GM12878 (cell line): ENCODE measurements at regions of chr17 and their contacts with region 1.

Region 1: GRCh38 chr17:8785547-8786413 is 13.4 kb downstream of the MFSD6L start:
- DNase-seq: no peak
- ATAC-seq: peak; percentile 89
- H3K4me3 ChIP-seq: no peak overlapping the region
- H3K27ac ChIP-seq: no peak overlapping the region
- H3K4me1 ChIP-seq: no peaks in the 10 kb centered on the region
- H3K27me3 ChIP-seq: no peaks in the 10 kb centered on the region
- CTCF ChIP-seq: peak; percentile 64 to 87 (median 84)
- EP300 ChIP-seq: no peak
- POLR2A ChIP-seq: no peak
- RAD21 ChIP-seq: peak; percentile 75

Region 2: GRCh38 chr17:8409966-8410864 is 375.6 kb before region 1 on chr17:
- CTCF ChIA-PET with region 1: interaction called, 22 read pairs
- POLR2A ChIA-PET with region 1: no interaction called
- RAD21 ChIA-PET with region 1: interaction called, 12 read pairs
- SMC1A ChIA-PET with region 1: interaction called, 9 read pairs
- in situ Hi-C with region 1: no loop called
- intact Hi-C with region 1: loop called (anchors 1 kb)
- DNase-seq: peak; percentile 17
- ATAC-seq: peak; percentile 90
- H3K4me3 ChIP-seq: no peak overlapping the region
- H3K27ac ChIP-seq: no peak overlapping the region
- H3K4me1 ChIP-seq: no peaks in the 10 kb centered on the region
- H3K27me3 ChIP-seq: peaks cover 0 to 4% of the 10 kb centered on the region in 2 experiments; a peak in 3 of 4 replicates
- CTCF ChIP-seq: peak; percentile 82 to 87 (median 83)
- EP300 ChIP-seq: 0 out of 4 replicates have a peak, but pooled peaks of 1 of the 2 experiments have one; percentile 15
- POLR2A ChIP-seq: no peak
- RAD21 ChIP-seq: peak; percentile 71

Region 3: GRCh38 chr17:8753976-8754440 is 31.8 kb before region 1 on chr17:
- CTCF ChIA-PET with region 1: interaction called, 19 read pairs
- POLR2A ChIA-PET with region 1: no interaction called
- RAD21 ChIA-PET with region 1: interaction called, 4 read pairs
- SMC1A ChIA-PET with region 1: interaction called, 7 read pairs
- in situ Hi-C with region 1: no loop called
- intact Hi-C with region 1: loop called (anchors 2 kb)
- DNase-seq: no peak
- ATAC-seq: peak; percentile 83
- H3K4me3 ChIP-seq: no peak overlapping the region
- H3K27ac ChIP-seq: no peak overlapping the region
- H3K4me1 ChIP-seq: no peaks in the 10 kb centered on the region
- H3K27me3 ChIP-seq: no peaks in the 10 kb centered on the region; a peak in 1 of 4 replicates
- CTCF ChIP-seq: peak; percentile 56 to 67 (median 58); a peak in 5 of 6 replicates
- EP300 ChIP-seq: no peak
- POLR2A ChIP-seq: no peak
- RAD21 ChIP-seq: peak; percentile 57

Region 4: DNA sequence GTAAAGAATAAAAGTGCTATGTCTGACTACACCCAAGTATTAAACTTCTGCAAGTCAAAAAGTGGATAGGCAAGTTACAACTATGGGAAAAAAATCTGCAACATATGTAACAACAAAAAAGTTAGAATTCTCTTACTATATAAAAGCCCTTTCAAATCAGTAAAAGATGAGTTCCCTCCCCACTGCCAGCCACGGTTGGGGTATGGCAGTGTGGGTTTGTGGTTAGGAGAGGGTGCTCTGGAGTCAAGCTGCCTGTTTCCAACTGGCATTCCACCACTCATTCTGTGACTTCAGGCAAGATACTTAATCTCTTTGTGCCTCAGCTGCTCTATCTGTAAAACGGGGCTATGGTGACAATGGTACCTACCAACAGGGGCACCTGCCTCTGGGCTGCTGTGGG is 40.0 kb after region 1 on chr17:
- CTCF ChIA-PET with region 1: interaction called, 10 read pairs
- POLR2A ChIA-PET with region 1: no interaction called
- RAD21 ChIA-PET with region 1: no interaction called
- SMC1A ChIA-PET with region 1: interaction called, 6 read pairs
- in situ Hi-C with region 1: no loop called
- intact Hi-C with region 1: no loop called
- DNase-seq: no peak
- ATAC-seq: no peak
- H3K4me3 ChIP-seq: no peak overlapping the region
- H3K27ac ChIP-seq: no peak overlapping the region
- H3K4me1 ChIP-seq: no peaks in the 10 kb centered on the region
- H3K27me3 ChIP-seq: no peaks in the 10 kb centered on the region
- CTCF ChIP-seq: no peak
- EP300 ChIP-seq: no peak
- POLR2A ChIP-seq: no peak
- RAD21 ChIP-seq: no peak

Region 5: GRCh38 chr17:9324864-9325263 is 539.1 kb after region 1 on chr17:
- CTCF ChIA-PET with region 1: no interaction called
- POLR2A ChIA-PET with region 1: no interaction called
- RAD21 ChIA-PET with region 1: no interaction called
- SMC1A ChIA-PET with region 1: no interaction called
- in situ Hi-C with region 1: no loop called
- intact Hi-C with region 1: no loop called
- DNase-seq: no peak
- ATAC-seq: no peak
- H3K4me3 ChIP-seq: no peak overlapping the region
- H3K27ac ChIP-seq: no peak overlapping the region
- H3K4me1 ChIP-seq: no peaks in the 10 kb centered on the region
- H3K27me3 ChIP-seq: no peaks in the 10 kb centered on the region
- CTCF ChIP-seq: no peak
- EP300 ChIP-seq: no peak
- POLR2A ChIP-seq: no peak
- RAD21 ChIP-seq: no peak